Caco-2 (cell line): ENCODE measurements at regions of chr4 and their contacts with region 1.

Region 1: GRCh38 chr4:143513306-143514168 is at the start of gene SMARCA5:
- DNase-seq: peak; percentile 96 to 98
- H3K4me3 ChIP-seq: peak within 1 kb of the TSS; percentile 97
- H3K4me3 Mint-ChIP-seq: peak within 1 kb of the TSS; percentile 96
- H3K27ac Mint-ChIP-seq: peak within 1 kb of the TSS; percentile 96
- H3K4me1 ChIP-seq: 0 out of 2 replicates have a peak, but pooled peaks cover 10% of the 10 kb centered on the region
- H3K4me1 Mint-ChIP-seq: peaks cover 6% of the 10 kb centered on the region
- H3K27me3 ChIP-seq: no peaks in the 10 kb centered on the region
- H3K27me3 Mint-ChIP-seq: no peaks in the 10 kb centered on the region
- CTCF ChIP-seq: no peak
- total RNA-seq, gene SMARCA5: 64.5 and 64.8 TPM in 2 replicates

Region 2: DNA sequence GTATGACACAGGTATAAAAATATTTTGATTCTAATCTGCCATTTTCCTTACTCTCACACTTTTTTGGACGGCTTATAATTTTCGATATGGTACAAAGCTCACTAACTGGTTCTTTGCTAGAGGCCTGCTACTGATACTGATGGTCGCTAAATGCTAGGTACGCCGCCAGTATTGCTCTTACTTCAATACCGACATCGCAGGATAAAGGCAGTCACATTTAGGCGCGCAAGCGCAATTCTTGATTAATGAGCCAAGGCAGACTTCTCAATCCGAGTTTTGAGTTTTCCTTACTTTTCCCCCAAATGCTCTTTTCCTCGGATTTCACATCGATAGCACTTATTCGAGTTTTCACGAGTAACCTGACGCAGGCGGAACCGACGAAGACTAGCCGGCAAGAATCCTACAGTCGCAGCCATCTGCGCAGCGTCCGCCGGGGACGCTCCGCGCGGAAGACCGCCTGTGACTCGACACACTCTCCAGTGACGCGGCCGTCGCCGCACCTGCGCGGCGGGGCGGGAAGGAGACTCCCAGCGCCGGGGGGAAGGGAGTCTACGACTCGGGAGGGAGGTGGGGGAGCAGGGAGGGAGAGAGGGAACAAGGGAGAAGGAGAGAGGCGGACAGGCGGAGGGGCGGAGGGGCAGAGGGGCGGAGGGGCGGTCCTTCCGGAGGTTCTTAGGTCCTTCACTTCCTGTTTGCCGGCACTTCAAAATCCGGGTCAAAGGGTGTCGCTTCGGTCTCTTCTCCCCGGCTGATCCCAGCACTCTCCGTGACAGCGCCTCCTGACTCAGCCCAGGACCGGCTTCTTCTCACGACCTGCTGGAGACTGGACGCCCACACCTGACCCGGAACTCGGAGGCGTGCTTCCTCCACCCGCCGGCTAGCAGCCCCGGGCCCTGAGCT is 329.1 kb before region 1 on chr4 and contains the start of gene USP38:
- CTCF ChIA-PET with region 1: no interaction called
- POLR2A ChIA-PET with region 1: interaction called, 3 read pairs
- intact Hi-C with region 1: loop called (anchors 1 kb)
- DNase-seq: peak; percentile 93 to 97
- H3K4me3 ChIP-seq: peak within 1 kb of the TSS; percentile 96
- H3K4me3 Mint-ChIP-seq: peak within 1 kb of the TSS; percentile 89
- H3K27ac Mint-ChIP-seq: peak within 1 kb of the TSS; percentile 96
- H3K4me1 ChIP-seq: peaks cover 13% of the 10 kb centered on the region; the same call in 1 of the 2 replicates
- H3K4me1 Mint-ChIP-seq: peaks cover 27% of the 10 kb centered on the region
- H3K27me3 ChIP-seq: no peaks in the 10 kb centered on the region
- H3K27me3 Mint-ChIP-seq: no peaks in the 10 kb centered on the region
- CTCF ChIP-seq: peak in 1 of 2 experiments; percentile 13
- total RNA-seq, gene USP38: 19.8 and 22.7 TPM in 2 replicates

Region 3: DNA sequence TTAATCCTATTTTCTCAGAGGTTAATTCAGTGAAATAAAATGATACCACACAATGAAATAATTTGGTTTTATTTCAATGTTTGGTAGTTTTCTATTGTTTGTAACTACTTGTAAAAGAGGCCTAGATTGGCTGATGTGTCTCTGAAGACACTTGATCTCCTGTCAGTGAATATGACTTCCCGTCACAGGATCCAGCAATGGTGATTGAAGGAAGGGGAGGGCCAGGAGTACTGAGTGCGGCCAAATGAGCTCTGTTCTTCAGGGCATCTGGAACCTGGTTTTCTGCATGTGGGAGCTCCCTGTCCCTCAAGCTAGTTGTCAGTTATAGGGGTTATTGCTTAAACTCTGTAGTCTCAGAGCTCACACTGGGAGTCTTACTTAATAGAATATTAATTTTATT is 1753.3 kb after region 1 on chr4:
- CTCF ChIA-PET with region 1: no interaction called
- POLR2A ChIA-PET with region 1: interaction called, 11 read pairs
- intact Hi-C with region 1: no loop called
- DNase-seq: no peak
- H3K4me3 ChIP-seq: no peak overlapping the region
- H3K4me3 Mint-ChIP-seq: no peak overlapping the region
- H3K27ac Mint-ChIP-seq: no peak overlapping the region
- H3K4me1 ChIP-seq: no peaks in the 10 kb centered on the region
- H3K4me1 Mint-ChIP-seq: no peaks in the 10 kb centered on the region
- H3K27me3 ChIP-seq: no peaks in the 10 kb centered on the region
- H3K27me3 Mint-ChIP-seq: no peaks in the 10 kb centered on the region
- CTCF ChIP-seq: no peak